Sigmoid colon (tissue), 7 donors: ENCODE measurements at regions of chr20 and their contacts with region 1.

Region 1: DNA sequence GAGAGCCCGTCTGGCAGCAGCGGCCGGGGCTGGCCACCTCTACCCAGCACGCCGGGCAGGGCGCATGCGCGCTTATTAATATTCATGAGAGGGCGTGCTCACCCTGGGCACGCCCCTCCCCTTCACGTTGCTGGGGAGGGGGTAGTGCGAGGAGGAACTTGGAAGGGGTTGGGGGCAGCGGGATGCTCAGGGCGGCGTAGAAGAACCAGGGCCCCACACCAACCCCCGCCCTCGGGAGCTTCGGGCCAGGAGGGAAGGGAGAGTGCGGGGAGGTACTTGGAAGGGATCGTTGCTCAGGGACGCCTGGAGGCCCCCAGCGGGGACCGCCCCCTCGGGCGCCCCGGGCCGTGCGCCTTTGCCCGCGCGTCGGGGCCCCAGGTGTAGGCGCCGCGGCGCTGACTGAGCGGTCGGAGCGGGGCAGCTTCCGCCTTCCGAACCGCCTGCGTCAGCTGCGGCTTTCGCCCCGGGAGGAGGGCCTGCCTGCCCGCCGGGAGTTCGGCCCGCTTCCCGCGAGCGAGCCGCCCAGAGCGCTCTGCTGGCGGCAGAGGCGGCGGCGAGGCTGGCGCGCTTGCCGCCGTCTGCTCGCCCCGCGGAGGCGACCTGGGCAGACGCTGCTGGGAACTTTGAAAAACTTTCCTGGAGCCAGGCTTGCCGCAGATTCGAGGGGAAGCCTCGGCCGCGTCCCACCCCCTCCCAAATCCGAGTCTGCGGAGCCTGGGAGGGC is at the start of gene JAG1:
- DNase-seq: peak; percentile 98
- H3K4me3 ChIP-seq: peak within 1 kb of the TSS; percentile 72 to 99 (median 90)
- H3K27ac ChIP-seq: peak within 1 kb of the TSS; percentile 96 to 99 (median 98)
- H3K4me1 ChIP-seq: peaks cover 0 to 38% (median 25%) of the 10 kb centered on the region in 4 donors
- H3K27me3 ChIP-seq: no peaks in the 10 kb centered on the region
- CTCF ChIP-seq: no peak
- EP300 ChIP-seq: no peak
- POLR2A ChIP-seq: no peak
- total RNA-seq, gene JAG1: 29.9 to 76.4 (median 53.1) TPM

Region 2: DNA sequence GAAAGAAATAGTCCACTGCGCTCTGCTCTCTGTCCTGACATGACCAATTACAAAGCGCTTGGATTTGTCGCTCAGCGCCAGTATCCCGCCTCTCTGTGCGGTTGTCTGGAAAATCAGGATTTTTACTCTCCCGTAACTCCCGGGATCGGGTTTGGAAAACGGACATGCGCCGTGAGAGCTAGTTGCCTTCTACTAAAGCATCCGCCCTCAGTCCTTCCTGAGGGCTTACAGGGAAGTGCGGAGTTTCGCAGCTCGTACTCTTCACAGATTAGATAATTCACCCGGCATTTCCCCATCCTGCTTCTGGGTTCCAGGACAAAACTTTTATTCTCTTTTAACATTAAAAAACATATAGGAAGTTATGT is 239.7 kb before region 1 on chr20:
- intact Hi-C with region 1: loop called (anchors 2 kb)
- DNase-seq: peak; percentile 98
- H3K4me3 ChIP-seq: peak overlapping the region; percentile 79 to 96 (median 91)
- H3K27ac ChIP-seq: peak overlapping the region; percentile 91 to 96 (median 94)
- H3K4me1 ChIP-seq: peaks cover 7 to 41% (median 20%) of the 10 kb centered on the region in 4 donors
- H3K27me3 ChIP-seq: no peaks in the 10 kb centered on the region
- CTCF ChIP-seq: no peak
- EP300 ChIP-seq: no peak
- POLR2A ChIP-seq: peak; percentile 97

Region 3: GRCh38 chr20:10508468-10509251 is 165.5 kb before region 1 on chr20:
- intact Hi-C with region 1: loop called (anchors 5 kb)
- DNase-seq: peak; percentile 82
- H3K4me3 ChIP-seq: no peak overlapping the region
- H3K27ac ChIP-seq: peak overlapping the region; percentile 53 to 87 (median 82)
- H3K4me1 ChIP-seq: peaks cover 0 to 81% (median 78%) of the 10 kb centered on the region in 4 donors
- H3K27me3 ChIP-seq: no peaks in the 10 kb centered on the region
- CTCF ChIP-seq: no peak
- EP300 ChIP-seq: no peak
- POLR2A ChIP-seq: no peak

Region 4: GRCh38 chr20:10553326-10553984 is 120.7 kb before region 1 on chr20:
- intact Hi-C with region 1: loop called (anchors 5 kb)
- DNase-seq: peak; percentile 79
- H3K4me3 ChIP-seq: no peak overlapping the region
- H3K27ac ChIP-seq: no peak overlapping the region
- H3K4me1 ChIP-seq: peaks cover 0 to 29% (median 15%) of the 10 kb centered on the region in 4 donors
- H3K27me3 ChIP-seq: no peaks in the 10 kb centered on the region
- CTCF ChIP-seq: peak; percentile 55 to 71 (median 66)
- EP300 ChIP-seq: no peak
- POLR2A ChIP-seq: no peak

Region 5: GRCh38 chr20:10626896-10627295 is 47.3 kb before region 1 on chr20:
- intact Hi-C with region 1: no loop called
- DNase-seq: no peak
- H3K4me3 ChIP-seq: no peak overlapping the region
- H3K27ac ChIP-seq: no peak overlapping the region
- H3K4me1 ChIP-seq: no peaks in the 10 kb centered on the region
- H3K27me3 ChIP-seq: no peaks in the 10 kb centered on the region
- CTCF ChIP-seq: no peak
- EP300 ChIP-seq: no peak
- POLR2A ChIP-seq: no peak

Region 6: GRCh38 chr20:10654630-10655029 is 19.5 kb before region 1 on chr20:
- intact Hi-C with region 1: loop called (anchors 2 kb)
- DNase-seq: no peak
- H3K4me3 ChIP-seq: no peak overlapping the region
- H3K27ac ChIP-seq: peak overlapping the region; percentile 55 to 87 (median 83)
- H3K4me1 ChIP-seq: peaks cover 0 to 89% (median 82%) of the 10 kb centered on the region in 4 donors
- H3K27me3 ChIP-seq: no peaks in the 10 kb centered on the region
- CTCF ChIP-seq: no peak
- EP300 ChIP-seq: no peak
- POLR2A ChIP-seq: no peak

Region 7: GRCh38 chr20:10739566-10739965 is 65.4 kb after region 1 on chr20:
- intact Hi-C with region 1: no loop called
- DNase-seq: no peak
- H3K4me3 ChIP-seq: peak overlapping the region in 3 of 4 donors; percentile 1 to 24 (median 11)
- H3K27ac ChIP-seq: peak overlapping the region in 1 of 4 donors; percentile 25
- H3K4me1 ChIP-seq: peaks cover 0 to 7% (median 3%) of the 10 kb centered on the region in 4 donors
- H3K27me3 ChIP-seq: no peaks in the 10 kb centered on the region
- CTCF ChIP-seq: no peak
- EP300 ChIP-seq: no peak
- POLR2A ChIP-seq: no peak

Region 8: DNA sequence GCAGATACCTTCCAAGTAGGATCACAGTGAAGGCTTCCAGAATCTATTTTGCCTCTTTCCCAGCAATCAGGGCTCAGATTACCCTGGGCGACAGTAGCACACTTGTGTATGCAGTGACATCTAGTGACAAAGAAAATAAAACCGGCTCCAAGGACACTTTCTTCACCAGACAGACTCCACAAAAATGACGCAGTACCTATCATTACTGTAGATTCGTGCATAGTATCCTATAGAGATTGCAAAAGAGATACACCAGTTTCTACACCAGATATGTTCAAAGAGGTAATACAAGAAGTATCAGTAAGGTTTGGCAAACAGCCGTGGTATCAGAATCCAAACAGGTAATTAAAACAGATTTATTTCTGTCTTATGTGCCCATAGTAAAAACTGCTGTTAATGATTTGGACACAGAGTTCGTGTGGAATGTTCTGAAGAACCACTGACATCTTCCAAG is 600.0 kb after region 1 on chr20:
- intact Hi-C with region 1: loop called (anchors 5 kb)
- DNase-seq: no peak
- H3K4me3 ChIP-seq: no peak overlapping the region
- H3K27ac ChIP-seq: no peak overlapping the region
- H3K4me1 ChIP-seq: no peaks in the 10 kb centered on the region
- H3K27me3 ChIP-seq: peaks cover 0 to 3% (median 0%) of the 10 kb centered on the region in 3 donors
- CTCF ChIP-seq: peak in 3 of 4 experiments; percentile 9 to 28 (median 15)
- EP300 ChIP-seq: no peak
- POLR2A ChIP-seq: no peak